ENCODE measurements at regions of chr2 and their contacts with region 1.

Region 1: GRCh38 chr2:196068271-196069209 is at the start of gene DNAH7:
- DNase-seq: peak; percentile 91
- CTCF ChIP-seq: peak; percentile 99

Region 2: DNA sequence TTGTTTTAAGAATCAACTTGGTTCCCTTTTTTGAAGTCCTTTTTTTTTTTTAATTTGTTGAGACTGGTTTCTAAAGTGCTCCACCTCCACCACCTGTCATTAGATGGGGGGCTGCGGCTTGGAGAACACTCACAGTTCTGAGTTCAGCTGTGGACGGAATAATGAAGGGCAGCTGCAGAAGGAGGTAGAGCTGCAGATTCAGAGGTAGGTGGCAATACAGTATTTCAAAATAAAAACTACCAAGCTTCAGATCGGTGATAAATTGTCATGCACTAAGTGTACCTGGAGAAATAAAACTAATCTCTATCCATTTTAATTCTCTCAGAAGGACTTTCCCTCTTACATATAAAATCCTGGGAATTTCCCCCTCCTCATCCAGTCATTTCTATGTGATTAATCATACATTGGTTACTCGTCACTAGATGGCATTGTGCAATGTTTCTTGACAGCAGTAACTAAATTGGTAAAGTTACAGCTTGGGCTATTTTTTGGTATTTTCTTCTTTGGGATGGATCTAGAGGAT is 492.6 kb before region 1 on chr2:
- CTCF ChIA-PET with region 1: interaction called, 17 read pairs
- POLR2A ChIA-PET with region 1: no interaction called
- DNase-seq: peak; percentile 38
- CTCF ChIP-seq: peak; percentile 49

Region 3: GRCh38 chr2:195664528-195664927 is 404.0 kb before region 1 on chr2:
- CTCF ChIA-PET with region 1: interaction called, 40 read pairs
- POLR2A ChIA-PET with region 1: no interaction called
- DNase-seq: no peak
- CTCF ChIP-seq: no peak

Region 4: DNA sequence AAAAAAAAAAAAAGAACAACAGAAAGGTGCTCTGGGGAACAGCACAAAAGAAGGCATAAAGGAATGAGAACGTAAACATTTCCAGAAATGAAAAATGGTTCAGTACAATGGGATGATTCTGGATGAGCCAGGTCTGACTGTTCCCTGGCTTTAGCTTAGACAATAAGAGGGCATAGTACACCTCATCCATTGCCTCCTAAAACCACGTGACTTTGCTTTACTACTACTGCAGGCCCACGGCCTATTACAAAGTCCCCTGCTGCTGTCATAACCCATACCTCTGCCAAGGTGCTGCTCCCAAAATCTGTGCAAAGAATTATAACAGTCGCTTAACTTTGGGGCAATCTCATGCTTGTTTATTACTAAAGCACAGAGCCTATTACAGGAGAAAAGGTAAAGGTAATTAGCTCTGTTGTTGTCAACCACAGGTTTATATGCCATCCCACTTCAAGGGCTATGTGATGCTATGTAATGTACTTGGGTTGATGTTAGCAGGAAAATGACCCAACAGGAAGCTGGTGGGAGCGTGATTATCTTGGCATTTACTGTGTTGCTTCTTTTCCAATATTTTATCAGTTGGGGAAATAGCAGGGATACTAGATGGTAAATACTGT is 76.1 kb after region 1 on chr2:
- CTCF ChIA-PET with region 1: no interaction called
- POLR2A ChIA-PET with region 1: interaction called, 11 read pairs
- DNase-seq: no peak
- CTCF ChIP-seq: no peak